ENCODE measurements at regions of chr14 and their contacts with region 1.

Region 1: GRCh38 chr14:37594238-37594914 is 673 bp downstream of the FOXA1 start:
- DNase-seq: peak; percentile 68
- H3K4me3 Mint-ChIP-seq: peak overlapping the region; percentile 51
- H3K27ac Mint-ChIP-seq: peak overlapping the region; percentile 10
- H3K4me1 Mint-ChIP-seq: peaks cover 31% of the 10 kb centered on the region
- H3K27me3 Mint-ChIP-seq: peaks cover 73% of the 10 kb centered on the region

Region 2: GRCh38 chr14:36315159-36315853 is 1279.1 kb before region 1 on chr14:
- CTCF ChIA-PET with region 1: no interaction called
- POLR2A ChIA-PET with region 1: no interaction called
- intact Hi-C with region 1: loop called (anchors 5 kb)
- DNase-seq: peak; percentile 49
- H3K4me3 Mint-ChIP-seq: peak overlapping the region; percentile 50
- H3K27ac Mint-ChIP-seq: peak overlapping the region; percentile 79
- H3K4me1 Mint-ChIP-seq: peaks cover 38% of the 10 kb centered on the region
- H3K27me3 Mint-ChIP-seq: no peaks in the 10 kb centered on the region

Region 3: DNA sequence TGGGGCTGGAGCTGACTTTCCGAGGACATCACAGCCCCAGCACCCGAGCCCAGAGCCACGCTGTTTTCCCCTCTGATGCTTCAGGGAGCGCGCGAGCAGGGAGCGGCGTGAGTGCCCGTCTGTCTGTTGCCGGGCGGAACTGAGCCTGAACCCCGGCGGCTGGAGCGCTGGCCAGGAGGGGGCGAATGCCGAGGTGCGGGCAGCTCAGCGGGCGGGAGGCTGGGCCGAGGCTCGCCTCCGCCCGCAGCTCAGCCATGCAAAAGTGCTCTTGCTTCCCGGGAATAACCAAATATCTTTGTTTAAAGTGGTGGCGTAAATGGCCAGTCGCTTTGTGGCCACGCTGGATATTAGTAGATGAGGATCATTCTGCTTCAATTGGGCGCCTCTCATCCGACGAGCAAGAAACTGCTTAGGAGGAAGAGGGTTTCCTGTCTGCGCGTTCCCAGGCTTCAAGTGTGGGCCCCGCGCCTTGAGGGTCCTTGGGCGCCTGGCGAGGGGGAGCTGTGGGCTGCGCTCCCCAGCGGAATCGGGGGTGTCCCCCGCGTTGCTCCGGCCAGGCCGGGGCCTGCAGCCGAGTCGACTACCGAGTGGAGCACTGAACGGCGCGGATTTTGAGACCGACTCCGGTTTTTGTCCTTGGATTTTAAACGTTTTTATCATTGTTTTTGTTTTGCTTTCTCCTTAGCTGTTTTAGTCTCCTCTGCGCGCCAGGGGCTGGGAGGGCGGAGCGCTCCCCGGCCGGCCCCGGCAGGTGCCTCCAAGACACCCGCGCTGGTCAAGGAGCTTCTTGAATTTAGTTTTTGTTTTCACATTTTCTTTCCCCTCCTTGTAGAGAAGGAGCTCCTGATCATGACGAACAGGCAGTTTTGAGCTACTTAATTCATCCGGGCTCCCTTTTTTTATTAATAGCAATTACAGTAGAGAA is 1073.5 kb before region 1 on chr14:
- CTCF ChIA-PET with region 1: no interaction called
- POLR2A ChIA-PET with region 1: no interaction called
- intact Hi-C with region 1: loop called (anchors 5 kb)
- DNase-seq: no peak
- H3K4me3 Mint-ChIP-seq: peak overlapping the region; percentile 26
- H3K27ac Mint-ChIP-seq: no peak overlapping the region
- H3K4me1 Mint-ChIP-seq: peaks cover 15% of the 10 kb centered on the region
- H3K27me3 Mint-ChIP-seq: peaks cover 67% of the 10 kb centered on the region

Region 4: GRCh38 chr14:36655963-36656686 is 938.3 kb before region 1 on chr14:
- CTCF ChIA-PET with region 1: no interaction called
- POLR2A ChIA-PET with region 1: no interaction called
- intact Hi-C with region 1: loop called (anchors 5 kb)
- DNase-seq: peak; percentile 58
- H3K4me3 Mint-ChIP-seq: peak overlapping the region; percentile 12
- H3K27ac Mint-ChIP-seq: no peak overlapping the region
- H3K4me1 Mint-ChIP-seq: peaks cover 23% of the 10 kb centered on the region
- H3K27me3 Mint-ChIP-seq: peaks cover 78% of the 10 kb centered on the region

Region 5: GRCh38 chr14:36866867-36867266 is 727.5 kb before region 1 on chr14:
- CTCF ChIA-PET with region 1: no interaction called
- POLR2A ChIA-PET with region 1: no interaction called
- intact Hi-C with region 1: no loop called
- DNase-seq: no peak
- H3K4me3 Mint-ChIP-seq: no peak overlapping the region
- H3K27ac Mint-ChIP-seq: no peak overlapping the region
- H3K4me1 Mint-ChIP-seq: no peaks in the 10 kb centered on the region
- H3K27me3 Mint-ChIP-seq: no peaks in the 10 kb centered on the region

Region 6: GRCh38 chr14:37874429-37875191 is 280.2 kb after region 1 on chr14:
- CTCF ChIA-PET with region 1: no interaction called
- POLR2A ChIA-PET with region 1: no interaction called
- intact Hi-C with region 1: loop called (anchors 1 kb)
- DNase-seq: peak; percentile 89
- H3K4me3 Mint-ChIP-seq: no peak overlapping the region
- H3K27ac Mint-ChIP-seq: no peak overlapping the region
- H3K4me1 Mint-ChIP-seq: peaks cover 6% of the 10 kb centered on the region
- H3K27me3 Mint-ChIP-seq: no peaks in the 10 kb centered on the region

Region 7: GRCh38 chr14:38208618-38209562 is 614.5 kb after region 1 on chr14:
- CTCF ChIA-PET with region 1: no interaction called
- POLR2A ChIA-PET with region 1: no interaction called
- intact Hi-C with region 1: loop called (anchors 5 kb)
- DNase-seq: peak; percentile 25
- H3K4me3 Mint-ChIP-seq: peak overlapping the region; percentile 52
- H3K27ac Mint-ChIP-seq: peak overlapping the region; percentile 6
- H3K4me1 Mint-ChIP-seq: peaks cover 25% of the 10 kb centered on the region
- H3K27me3 Mint-ChIP-seq: peaks cover 54% of the 10 kb centered on the region

Region 8: DNA sequence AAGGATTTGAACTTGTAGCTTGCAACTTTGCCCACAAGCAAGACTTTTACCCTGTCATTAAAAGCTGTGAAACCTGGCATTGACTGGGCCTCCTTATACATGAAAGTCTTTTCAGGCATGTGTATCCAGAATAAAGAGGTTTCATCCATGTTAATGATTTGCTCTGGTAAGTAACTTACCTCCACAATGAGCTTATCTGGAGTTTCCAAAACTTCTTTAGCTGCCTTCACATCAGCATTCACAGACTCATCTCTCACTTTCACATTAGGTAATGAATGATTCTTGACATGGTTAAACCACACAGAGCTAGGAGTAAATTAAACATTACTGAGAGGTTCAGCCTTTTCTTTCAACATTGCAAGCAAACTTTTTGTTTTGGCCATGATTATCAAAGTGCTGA is 895.9 kb after region 1 on chr14:
- CTCF ChIA-PET with region 1: no interaction called
- POLR2A ChIA-PET with region 1: no interaction called
- intact Hi-C with region 1: no loop called
- DNase-seq: no peak
- H3K4me3 Mint-ChIP-seq: no peak overlapping the region
- H3K27ac Mint-ChIP-seq: no peak overlapping the region
- H3K4me1 Mint-ChIP-seq: no peaks in the 10 kb centered on the region
- H3K27me3 Mint-ChIP-seq: no peaks in the 10 kb centered on the region

Measured in activated CD4-positive, alpha-beta memory T cell treated with anti-CD3 and anti-CD28 coated beads for 36 hours (primary cell).